Heart left ventricle (tissue), 16 donors: ENCODE measurements at regions of chr10 and their contacts with region 1.

Region 1: DNA sequence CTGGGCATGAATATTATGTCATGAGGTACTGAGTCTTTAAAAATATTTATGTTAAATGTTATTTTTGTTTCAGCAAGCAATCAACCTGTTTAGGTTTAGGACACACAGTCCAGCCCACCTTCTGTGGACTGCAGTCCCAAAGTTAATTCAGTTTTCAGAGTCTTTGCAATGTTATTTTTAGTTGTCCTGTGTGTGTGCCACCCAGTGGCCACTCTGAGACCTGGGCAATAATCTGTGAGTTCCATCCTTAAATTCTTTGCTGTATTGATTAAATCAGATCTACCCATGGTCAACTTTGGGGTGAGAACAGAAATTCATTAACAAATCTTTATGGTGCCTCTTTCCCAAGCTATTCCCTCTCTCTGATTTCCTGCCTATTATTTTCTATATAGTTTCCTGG is 415.1 kb downstream of the CCSER2 start:
- DNase-seq: no peak
- ATAC-seq: no peak
- H3K4me3 ChIP-seq: no peak overlapping the region
- H3K27ac ChIP-seq: no peak overlapping the region
- H3K4me1 ChIP-seq: no peaks in the 10 kb centered on the region
- H3K27me3 ChIP-seq: peaks cover 0 to 8% (median 0%) of the 10 kb centered on the region in 9 donors
- CTCF ChIP-seq: peak in 10 of 12 donors; percentile 5 to 44 (median 24)
- POLR2A ChIP-seq: no peak

Region 2: DNA sequence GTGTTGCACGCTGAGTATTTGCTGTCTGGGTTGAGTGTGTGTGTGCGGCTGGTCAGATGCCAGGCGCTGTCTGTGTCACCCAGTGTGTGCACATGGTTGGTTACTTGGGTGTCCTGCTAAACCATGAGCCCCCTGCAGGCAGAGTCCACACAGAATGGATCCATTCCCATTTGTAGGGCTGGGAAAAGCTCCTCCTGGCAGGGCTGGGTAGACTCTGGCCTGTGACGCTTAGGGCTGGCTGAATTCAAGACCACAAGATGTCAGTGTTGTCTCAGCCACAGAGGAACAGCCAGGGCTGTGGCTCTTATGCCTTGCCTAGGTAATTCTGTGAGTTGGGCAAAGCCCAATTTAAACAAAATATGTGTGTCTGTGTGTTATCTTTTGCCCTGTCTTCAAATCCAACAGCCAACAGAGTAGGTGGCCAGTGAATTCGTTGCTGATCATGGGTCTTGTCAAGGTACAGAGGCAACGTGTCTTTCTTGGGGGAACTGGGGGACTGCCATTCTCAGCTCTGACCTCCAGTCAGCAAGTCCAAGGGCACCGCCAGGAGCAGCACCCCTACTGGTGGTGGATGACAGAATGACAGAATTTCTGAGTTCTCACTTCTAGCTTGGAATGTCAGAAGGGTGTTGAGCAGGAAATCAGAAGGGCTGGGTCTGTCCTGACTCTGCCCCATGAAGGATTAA is 130.0 kb before region 1 on chr10:
- intact Hi-C with region 1: loop called in 1 of 10 experiments (anchors 10 kb)
- DNase-seq: peak in 2 of 5 donors; percentile 18 to 36
- ATAC-seq: peak; percentile 71 to 90 (median 88)
- H3K4me3 ChIP-seq: no peak overlapping the region
- H3K27ac ChIP-seq: no peak overlapping the region
- H3K4me1 ChIP-seq: peaks cover 0 to 5% (median 0%) of the 10 kb centered on the region in 12 donors
- H3K27me3 ChIP-seq: peaks cover 0 to 9% (median 0%) of the 10 kb centered on the region in 9 donors
- CTCF ChIP-seq: peak in 10 of 12 donors; percentile 23 to 59 (median 42)
- POLR2A ChIP-seq: no peak